HCT116 (cell line): ENCODE measurements at regions of chr9 and their contacts with region 1.

Region 1: GRCh38 chr9:113578882-113579282 is 115.4 kb downstream of the RGS3 start:
- DNase-seq: peak; percentile 59
- ATAC-seq: peak; percentile 86
- H3K4me3 ChIP-seq: peak overlapping the region in 1 of 2 experiments; percentile 16; a peak in 2 of 4 replicates
- H3K27ac ChIP-seq: peak overlapping the region; percentile 82
- H3K4me1 ChIP-seq: peaks cover 52 to 70% of the 10 kb centered on the region in 2 experiments
- H3K27me3 ChIP-seq: no peaks in the 10 kb centered on the region
- CTCF ChIP-seq: no peak
- POLR2A ChIP-seq: no peak
- RAD21 ChIP-seq: no peak

Region 2: GRCh38 chr9:113446323-113446740 is 132.6 kb before region 1 on chr9:
- CTCF ChIA-PET with region 1: interaction called, 10 read pairs
- POLR2A ChIA-PET with region 1: no interaction called
- RAD21 ChIA-PET with region 1: interaction called in 1 of 2 experiments, 6 read pairs
- intact Hi-C with region 1: no loop called
- DNase-seq: peak; percentile 31
- ATAC-seq: peak; percentile 76
- H3K4me3 ChIP-seq: no peak overlapping the region
- H3K27ac ChIP-seq: no peak overlapping the region
- H3K4me1 ChIP-seq: no peaks in the 10 kb centered on the region
- H3K27me3 ChIP-seq: no peaks in the 10 kb centered on the region
- CTCF ChIP-seq: peak; percentile 43 to 86 (median 67)
- POLR2A ChIP-seq: no peak
- RAD21 ChIP-seq: peak; percentile 90

Region 3: GRCh38 chr9:113591001-113591898 is 12.4 kb after region 1 on chr9:
- CTCF ChIA-PET with region 1: interaction called, 35 read pairs
- POLR2A ChIA-PET with region 1: interaction called, 4 read pairs
- RAD21 ChIA-PET with region 1: interaction called in 1 of 2 experiments, 3 read pairs
- intact Hi-C with region 1: no loop called
- DNase-seq: no peak
- ATAC-seq: peak; percentile 78
- H3K4me3 ChIP-seq: no peak overlapping the region
- H3K27ac ChIP-seq: no peak overlapping the region
- H3K4me1 ChIP-seq: peaks cover 9 to 16% of the 10 kb centered on the region in 2 experiments
- H3K27me3 ChIP-seq: no peaks in the 10 kb centered on the region
- CTCF ChIP-seq: peak; percentile 90 to 96 (median 91)
- POLR2A ChIP-seq: no peak
- RAD21 ChIP-seq: peak; percentile 98

Region 4: GRCh38 chr9:113602126-113603044 is 23.5 kb after region 1 on chr9:
- CTCF ChIA-PET with region 1: no interaction called
- POLR2A ChIA-PET with region 1: interaction called, 12 read pairs
- RAD21 ChIA-PET with region 1: no interaction called
- intact Hi-C with region 1: no loop called
- DNase-seq: peak; percentile 53
- ATAC-seq: peak; percentile 91
- H3K4me3 ChIP-seq: peak overlapping the region; percentile 4 to 44; a peak in 2 of 4 replicates
- H3K27ac ChIP-seq: peak overlapping the region; percentile 48; the same call in 1 of the 2 replicates
- H3K4me1 ChIP-seq: peaks cover 20 to 43% of the 10 kb centered on the region in 2 experiments
- H3K27me3 ChIP-seq: no peaks in the 10 kb centered on the region
- CTCF ChIP-seq: no peak
- POLR2A ChIP-seq: no peak
- RAD21 ChIP-seq: no peak